CD4-positive, alpha-beta memory T cell (primary cell): ENCODE measurements at regions of chr1 and their contacts with region 1.

Region 1: GRCh38 chr1:66300972-66301451 is 232.9 kb upstream of the SGIP1 start:
- DNase-seq: peak; percentile 56 to 68 (median 58)
- H3K4me3 ChIP-seq: no peak overlapping the region
- H3K4me3 Mint-ChIP-seq: peak overlapping the region; percentile 80 to 90 (median 84)
- H3K27ac ChIP-seq: peak overlapping the region; percentile 52
- H3K27ac Mint-ChIP-seq: peak overlapping the region; percentile 83 to 98 (median 96)
- H3K4me1 ChIP-seq: peaks cover 32% of the 10 kb centered on the region
- H3K4me1 Mint-ChIP-seq: peaks cover 23 to 41% (median 30%) of the 10 kb centered on the region in 4 donors
- H3K27me3 ChIP-seq: no peaks in the 10 kb centered on the region
- H3K27me3 Mint-ChIP-seq: no peaks in the 10 kb centered on the region

Region 2: GRCh38 chr1:66339944-66340343 is 38.9 kb after region 1 on chr1:
- CTCF ChIA-PET with region 1: interaction called, 19 read pairs
- POLR2A ChIA-PET with region 1: interaction called, 101 read pairs
- intact Hi-C with region 1: no loop called
- DNase-seq: no peak
- H3K4me3 ChIP-seq: peak overlapping the region in 1 of 2 donors; percentile 11
- H3K4me3 Mint-ChIP-seq: peak overlapping the region; percentile 52 to 84 (median 67)
- H3K27ac ChIP-seq: peak overlapping the region; percentile 49
- H3K27ac Mint-ChIP-seq: peak overlapping the region; percentile 61 to 94 (median 80)
- H3K4me1 ChIP-seq: peaks cover 88% of the 10 kb centered on the region
- H3K4me1 Mint-ChIP-seq: peaks cover 46 to 86% (median 68%) of the 10 kb centered on the region in 4 donors
- H3K27me3 ChIP-seq: no peaks in the 10 kb centered on the region
- H3K27me3 Mint-ChIP-seq: no peaks in the 10 kb centered on the region